ENCODE measurements at regions of chr2 and their contacts with region 1.

Region 1: DNA sequence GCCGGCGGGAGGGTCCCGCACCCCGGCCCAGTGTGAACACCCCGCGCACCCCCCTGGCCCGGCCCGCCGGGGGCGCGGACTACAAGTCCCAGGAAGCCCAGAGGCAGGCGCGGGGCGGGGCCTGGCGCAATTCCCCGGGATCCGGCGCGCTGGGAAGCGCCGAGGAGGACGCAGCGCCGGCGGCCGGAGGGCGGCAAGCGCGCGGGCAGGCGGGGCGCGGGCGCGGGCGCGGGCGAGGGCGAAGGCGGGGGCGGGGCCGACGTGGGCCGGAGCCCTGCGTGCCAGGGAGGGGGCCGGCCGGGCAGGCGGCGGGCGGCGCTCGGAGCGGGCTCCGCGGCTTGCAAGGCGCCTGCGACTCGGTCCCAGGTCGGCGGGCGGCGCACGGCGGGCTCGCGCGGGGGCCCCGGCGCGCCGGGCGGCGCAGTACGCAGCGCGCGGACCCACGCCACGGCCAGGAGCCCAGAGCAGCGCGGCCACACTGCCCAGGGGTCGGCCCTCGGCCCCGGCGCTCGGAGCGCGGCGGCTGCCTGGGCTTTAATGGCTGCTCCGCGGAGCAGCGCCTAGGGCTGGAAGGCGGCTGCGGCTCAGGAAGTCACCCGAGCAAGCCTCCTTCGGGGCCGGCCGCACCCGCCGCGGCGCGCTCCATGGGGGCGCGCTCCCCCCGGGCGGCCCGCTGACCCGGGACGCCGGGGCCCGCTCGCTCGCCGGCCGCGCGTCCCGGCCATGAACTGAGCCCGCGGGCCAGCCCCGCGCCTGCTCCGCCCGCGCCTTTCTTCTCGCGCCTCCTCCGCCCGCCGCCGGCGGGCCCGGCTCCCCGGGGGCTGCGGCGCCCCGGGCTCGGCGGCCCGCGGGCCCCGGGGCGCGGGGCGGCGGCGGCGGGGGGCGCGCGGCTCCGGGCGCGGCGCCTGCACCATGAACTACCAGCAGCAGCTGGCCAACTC is at the start of gene AGAP1:
- DNase-seq: peak; percentile 89 to 94 (median 91)
- ATAC-seq: peak; percentile 84 to 95 (median 92)
- H3K4me3 ChIP-seq: peak within 1 kb of the TSS; percentile 53 to 94 (median 67)
- H3K27ac ChIP-seq: peak within 1 kb of the TSS; percentile 31 to 87 (median 78)
- H3K4me1 ChIP-seq: peaks cover 0 to 40% (median 24%) of the 10 kb centered on the region in 12 donors
- H3K27me3 ChIP-seq: peaks cover 0 to 23% (median 0%) of the 10 kb centered on the region in 9 donors
- CTCF ChIP-seq: no peak
- POLR2A ChIP-seq: peak in 1 of 2 donors; percentile 63
- total RNA-seq, gene AGAP1: 16.3 to 21.6 (median 19.3) TPM

Region 2: GRCh38 chr2:233912691-233913423 is 1581.2 kb before region 1 on chr2:
- intact Hi-C with region 1: no loop called
- DNase-seq: no peak
- ATAC-seq: peak in 1 of 4 donors; percentile 60
- H3K4me3 ChIP-seq: no peak overlapping the region
- H3K27ac ChIP-seq: no peak overlapping the region
- H3K4me1 ChIP-seq: no peaks in the 10 kb centered on the region
- H3K27me3 ChIP-seq: peaks cover 0 to 14% (median 0%) of the 10 kb centered on the region in 9 donors
- CTCF ChIP-seq: no peak
- POLR2A ChIP-seq: no peak

Region 3: DNA sequence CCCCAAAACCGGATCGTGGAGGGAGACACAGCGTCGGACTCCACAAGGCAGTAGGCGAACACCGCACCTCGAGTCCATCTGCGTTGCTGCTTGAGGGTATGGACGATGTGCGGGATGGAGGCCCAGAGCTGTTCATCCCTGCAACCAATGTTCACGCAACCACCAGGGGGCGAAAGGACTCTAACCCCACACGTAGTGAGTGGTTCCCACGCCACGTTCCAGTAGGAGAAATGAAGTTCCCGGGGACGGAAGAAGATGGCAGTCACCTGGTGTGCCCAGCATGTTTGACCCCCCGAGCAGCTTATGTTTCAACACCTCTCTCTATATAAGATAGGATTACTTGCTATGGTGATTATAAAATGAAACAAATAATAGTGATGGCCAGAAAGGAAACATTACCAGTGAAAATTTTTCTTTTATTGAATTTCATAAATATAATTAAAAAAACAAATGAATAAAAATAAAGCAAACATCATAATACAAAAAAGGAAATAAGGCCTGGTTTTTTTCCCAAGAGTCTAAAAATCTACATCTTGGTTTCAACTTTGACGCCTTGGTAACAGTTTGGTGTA is 358.0 kb before region 1 on chr2:
- intact Hi-C with region 1: loop called in 3 of 10 experiments (anchors 5 to 10 kb)
- DNase-seq: peak; percentile 71 to 87 (median 84)
- ATAC-seq: peak; percentile 73 to 96 (median 89)
- H3K4me3 ChIP-seq: no peak overlapping the region
- H3K27ac ChIP-seq: no peak overlapping the region
- H3K4me1 ChIP-seq: no peaks in the 10 kb centered on the region
- H3K27me3 ChIP-seq: no peaks in the 10 kb centered on the region
- CTCF ChIP-seq: peak; percentile 63 to 88 (median 74)
- POLR2A ChIP-seq: no peak

Region 4: DNA sequence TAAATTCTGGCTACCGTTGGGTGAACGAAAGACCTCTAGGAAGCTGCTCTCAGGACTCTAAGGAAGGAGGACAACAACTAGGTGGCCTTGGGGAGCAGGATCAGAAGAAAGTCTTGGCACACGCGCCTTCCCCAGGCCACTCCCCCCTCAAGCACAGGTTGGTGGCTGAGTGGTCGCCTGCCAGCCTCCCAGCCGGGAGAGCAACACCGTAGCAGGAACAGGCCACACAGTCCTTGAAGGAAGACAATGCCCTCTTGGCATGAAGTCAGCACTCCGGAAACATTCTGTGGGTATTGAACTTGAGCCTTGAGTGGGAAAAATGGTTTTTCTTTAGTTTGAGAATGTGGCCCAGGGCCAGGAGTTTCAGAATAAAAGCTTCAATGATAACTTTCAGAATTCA is 87.6 kb before region 1 on chr2:
- intact Hi-C with region 1: no loop called
- DNase-seq: no peak
- ATAC-seq: no peak
- H3K4me3 ChIP-seq: no peak overlapping the region
- H3K27ac ChIP-seq: no peak overlapping the region
- H3K4me1 ChIP-seq: no peaks in the 10 kb centered on the region
- H3K27me3 ChIP-seq: peaks cover 0 to 4% (median 0%) of the 10 kb centered on the region in 9 donors
- CTCF ChIP-seq: no peak
- POLR2A ChIP-seq: no peak

Region 5: GRCh38 chr2:235433860-235434259 is 60.2 kb before region 1 on chr2:
- intact Hi-C with region 1: loop called in 2 of 10 experiments (anchors 1 to 10 kb)
- DNase-seq: peak in 4 of 5 donors; percentile 66 to 84 (median 71)
- ATAC-seq: peak; percentile 82 to 96 (median 93)
- H3K4me3 ChIP-seq: no peak overlapping the region
- H3K27ac ChIP-seq: peak overlapping the region in 11 of 12 donors; percentile 56 to 79 (median 67)
- H3K4me1 ChIP-seq: peaks cover 0 to 22% (median 17%) of the 10 kb centered on the region in 12 donors
- H3K27me3 ChIP-seq: no peaks in the 10 kb centered on the region
- CTCF ChIP-seq: peak in 8 of 12 donors; percentile 10 to 42 (median 28)
- POLR2A ChIP-seq: no peak

Region 6: GRCh38 chr2:235551965-235552364 is 57.9 kb after region 1 on chr2:
- intact Hi-C with region 1: loop called in 4 of 10 experiments (anchors 5 to 10 kb)
- DNase-seq: peak in 3 of 5 donors; percentile 37 to 61 (median 37)
- ATAC-seq: peak; percentile 63 to 84 (median 74)
- H3K4me3 ChIP-seq: no peak overlapping the region
- H3K27ac ChIP-seq: no peak overlapping the region
- H3K4me1 ChIP-seq: peaks cover 0 to 25% (median 13%) of the 10 kb centered on the region in 12 donors
- H3K27me3 ChIP-seq: no peaks in the 10 kb centered on the region
- CTCF ChIP-seq: peak in 11 of 12 donors; percentile 30 to 74 (median 57)
- POLR2A ChIP-seq: no peak

Region 7: DNA sequence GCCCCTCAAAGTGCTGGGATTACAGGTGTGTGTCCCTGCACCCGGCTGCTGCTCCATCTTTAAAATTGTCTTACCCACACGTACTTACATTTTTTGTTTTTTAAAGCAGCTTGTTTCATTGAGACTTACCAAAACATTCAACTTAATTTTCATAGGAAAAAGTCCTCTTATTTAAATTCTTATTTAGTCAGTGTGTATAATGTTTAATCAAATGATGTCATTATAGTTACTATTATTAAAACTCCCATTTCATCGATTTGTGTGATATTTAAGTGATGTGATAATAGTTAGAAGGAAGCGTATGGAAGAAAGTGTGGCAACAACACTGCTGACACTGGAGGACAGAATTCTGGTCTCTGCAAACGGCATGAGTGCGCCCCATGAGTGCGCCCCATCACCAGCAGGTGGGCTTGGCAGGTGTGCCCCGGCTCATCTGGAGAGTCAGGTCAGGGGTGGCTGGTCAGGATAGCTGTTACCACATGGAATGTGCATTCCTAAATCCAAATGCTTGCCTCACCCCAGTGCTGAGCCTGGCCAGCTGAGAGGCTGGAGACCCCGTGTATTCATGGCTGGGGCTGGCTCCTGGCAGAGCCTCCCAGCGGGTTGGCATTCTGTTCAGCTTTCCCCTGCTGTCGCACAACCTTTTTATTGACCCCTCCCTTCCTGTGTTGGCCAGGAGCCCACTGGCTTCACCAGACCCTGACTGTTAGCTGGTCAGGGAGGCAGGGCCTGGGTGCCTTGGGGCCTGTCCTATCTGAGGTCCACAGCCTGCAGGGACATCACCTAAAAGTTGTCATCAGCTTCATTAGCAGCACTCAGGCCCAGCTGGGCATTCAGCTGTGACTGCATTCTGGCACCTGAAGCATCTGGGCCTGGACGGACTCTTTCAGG is 79.5 kb after region 1 on chr2:
- intact Hi-C with region 1: loop called in 1 of 10 experiments (anchors 5 kb)
- DNase-seq: peak; percentile 45 to 86 (median 72)
- ATAC-seq: peak; percentile 46 to 78 (median 72)
- H3K4me3 ChIP-seq: no peak overlapping the region
- H3K27ac ChIP-seq: no peak overlapping the region
- H3K4me1 ChIP-seq: peaks cover 0 to 31% (median 14%) of the 10 kb centered on the region in 12 donors
- H3K27me3 ChIP-seq: no peaks in the 10 kb centered on the region
- CTCF ChIP-seq: no peak
- POLR2A ChIP-seq: no peak

Region 8: DNA sequence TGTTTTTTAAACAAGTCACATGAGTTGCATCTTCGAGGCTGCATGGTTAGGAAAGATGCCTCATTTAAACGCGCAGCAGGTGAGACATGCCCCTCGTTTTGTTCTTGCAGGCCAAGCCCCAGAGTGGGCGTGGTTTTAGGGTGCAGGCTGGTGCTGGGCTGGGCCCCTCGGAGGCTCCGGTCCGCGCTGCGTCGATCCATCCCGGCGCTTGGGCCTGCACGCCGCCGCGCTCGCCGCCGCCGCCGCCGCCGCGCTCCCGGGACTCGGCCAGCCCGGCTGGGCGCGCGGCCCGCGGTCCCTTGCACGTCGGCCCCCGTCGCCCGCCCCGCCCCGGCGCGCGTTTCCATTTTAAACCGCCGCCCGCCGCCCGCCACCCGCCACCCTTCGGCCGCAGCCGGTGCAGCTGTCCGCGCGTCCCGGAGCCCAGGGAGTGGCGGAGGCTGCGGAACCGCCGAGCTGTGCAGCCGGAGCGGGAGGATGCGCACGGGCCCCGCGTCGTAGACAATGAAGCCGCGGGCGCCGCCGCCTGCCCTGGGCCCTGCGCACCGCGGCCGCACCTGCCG is 175.3 kb after region 1 on chr2:
- intact Hi-C with region 1: loop called in 2 of 10 experiments (anchors 10 kb)
- DNase-seq: peak; percentile 71 to 86 (median 80)
- ATAC-seq: peak in 3 of 4 donors; percentile 64 to 85 (median 82)
- H3K4me3 ChIP-seq: peak overlapping the region in 11 of 12 donors; percentile 20 to 75 (median 58)
- H3K27ac ChIP-seq: peak overlapping the region in 1 of 12 donors; percentile 48
- H3K4me1 ChIP-seq: peaks cover 0 to 43% (median 18%) of the 10 kb centered on the region in 12 donors
- H3K27me3 ChIP-seq: peaks cover 0 to 42% (median 0%) of the 10 kb centered on the region in 9 donors
- CTCF ChIP-seq: peak in 2 of 12 donors; percentile 7 to 27
- POLR2A ChIP-seq: no peak